Activated T-helper 2 cell treated with anti-CD3 and anti-CD28 coated beads, Interferon-gamma antibody, Interleukin-2, Interleukin-4, amounts not matched to agents 10 μg/mL and 5 μg/mL and 100 μg/mL, durations not matched to agents 14 hours and 24 hours and 36 hours (primary cell): ENCODE measurements at regions of chr2 and their contacts with region 1.

Region 1: GRCh38 chr2:207503234-207503633 is 26.5 kb upstream of the CREB1 start:
- DNase-seq: no peak
- H3K4me3 Mint-ChIP-seq: no peak overlapping the region
- H3K27ac Mint-ChIP-seq: no peak overlapping the region
- H3K4me1 Mint-ChIP-seq: peaks cover 67% of the 10 kb centered on the region
- H3K27me3 Mint-ChIP-seq: no peaks in the 10 kb centered on the region

Region 2: DNA sequence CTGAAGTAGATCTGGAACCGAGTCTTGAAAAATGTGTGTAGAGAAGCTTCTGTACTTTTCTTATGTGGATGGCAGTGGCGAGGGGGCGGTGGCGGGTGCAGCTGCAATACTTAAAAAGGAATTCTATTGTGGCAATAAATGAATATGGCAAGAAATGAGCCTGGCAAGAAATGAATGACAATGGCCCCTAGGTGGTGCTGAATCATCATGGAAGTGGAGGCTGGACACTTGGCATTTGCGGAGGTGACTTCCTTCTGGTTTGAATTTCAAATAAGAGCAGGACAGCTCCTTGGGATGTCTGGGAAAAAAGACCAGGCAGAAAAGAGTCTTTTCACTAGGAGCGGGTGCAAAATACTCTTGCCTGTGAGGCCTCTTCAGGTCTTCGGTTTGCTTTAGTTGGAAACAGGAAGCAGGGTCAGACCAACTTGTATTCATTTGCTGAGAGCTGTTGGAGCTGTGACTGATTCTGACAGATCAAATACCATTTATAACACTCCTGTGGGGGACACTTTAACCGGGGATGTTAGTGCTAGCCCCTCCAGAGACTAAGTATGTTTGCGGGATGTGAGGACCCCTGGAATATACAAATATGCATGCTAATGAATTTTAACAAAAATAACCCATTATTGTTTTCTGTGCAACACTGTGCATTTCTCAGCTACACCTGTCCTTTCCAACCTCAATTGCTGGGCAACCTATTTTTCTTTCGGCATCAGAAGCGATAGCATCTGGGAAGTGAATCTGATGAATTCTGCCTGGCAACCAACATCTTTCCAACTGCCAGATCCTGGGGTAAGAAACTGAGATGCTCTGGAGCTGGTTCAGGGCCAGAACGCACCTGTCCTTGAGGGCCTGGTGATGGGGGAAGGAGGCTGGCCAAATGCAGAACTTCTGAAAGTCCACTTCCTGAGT is 702.5 kb before region 1 on chr2:
- intact Hi-C with region 1: loop called (anchors 1 kb)
- DNase-seq: peak; percentile 40
- H3K4me3 Mint-ChIP-seq: peak overlapping the region; percentile 57
- H3K27ac Mint-ChIP-seq: peak overlapping the region; percentile 13
- H3K4me1 Mint-ChIP-seq: peaks cover 18% of the 10 kb centered on the region
- H3K27me3 Mint-ChIP-seq: no peaks in the 10 kb centered on the region

Region 3: DNA sequence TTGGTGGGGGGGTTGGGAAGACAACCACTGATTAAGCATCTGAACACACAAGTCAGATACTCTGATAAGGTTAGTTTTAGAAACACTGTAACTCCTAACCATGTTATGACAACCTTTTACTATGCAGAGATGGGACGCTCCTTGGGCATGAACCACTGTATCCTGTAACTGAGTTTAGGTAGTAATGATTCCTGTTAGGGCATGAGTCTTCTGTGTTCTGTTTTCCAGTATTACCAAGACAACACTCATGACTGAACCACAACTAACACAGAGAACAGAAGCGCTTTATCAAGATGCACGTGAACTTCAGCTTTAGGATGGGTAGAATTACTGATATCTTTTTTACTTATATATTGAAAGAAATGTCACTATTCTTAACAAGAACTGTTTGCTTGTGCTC is 12.4 kb after region 1 on chr2:
- intact Hi-C with region 1: loop called (anchors 1 kb)
- DNase-seq: no peak
- H3K4me3 Mint-ChIP-seq: no peak overlapping the region
- H3K27ac Mint-ChIP-seq: peak overlapping the region; percentile 40
- H3K4me1 Mint-ChIP-seq: peaks cover 45% of the 10 kb centered on the region
- H3K27me3 Mint-ChIP-seq: no peaks in the 10 kb centered on the region

Region 4: GRCh38 chr2:207993151-207993763 is 490.0 kb after region 1 on chr2:
- intact Hi-C with region 1: no loop called
- DNase-seq: no peak
- H3K4me3 Mint-ChIP-seq: no peak overlapping the region
- H3K27ac Mint-ChIP-seq: no peak overlapping the region
- H3K4me1 Mint-ChIP-seq: peaks cover 9% of the 10 kb centered on the region
- H3K27me3 Mint-ChIP-seq: no peaks in the 10 kb centered on the region